ENCODE measurements at regions of chr2 and their contacts with region 1.

Region 1: GRCh38 chr2:219530048-219530963 is 13.3 kb downstream of the CHPF start:
- DNase-seq: peak; percentile 95
- H3K4me3 Mint-ChIP-seq: no peak overlapping the region
- H3K27ac Mint-ChIP-seq: no peak overlapping the region
- H3K4me1 Mint-ChIP-seq: peaks cover 3% of the 10 kb centered on the region
- H3K27me3 Mint-ChIP-seq: peaks cover 59% of the 10 kb centered on the region

Region 2: GRCh38 chr2:219402665-219403515 is 127.4 kb before region 1 on chr2:
- intact Hi-C with region 1: loop called (anchors 1 kb)
- DNase-seq: peak; percentile 86
- H3K4me3 Mint-ChIP-seq: no peak overlapping the region
- H3K27ac Mint-ChIP-seq: no peak overlapping the region
- H3K4me1 Mint-ChIP-seq: no peaks in the 10 kb centered on the region
- H3K27me3 Mint-ChIP-seq: peaks cover 9% of the 10 kb centered on the region

Region 3: DNA sequence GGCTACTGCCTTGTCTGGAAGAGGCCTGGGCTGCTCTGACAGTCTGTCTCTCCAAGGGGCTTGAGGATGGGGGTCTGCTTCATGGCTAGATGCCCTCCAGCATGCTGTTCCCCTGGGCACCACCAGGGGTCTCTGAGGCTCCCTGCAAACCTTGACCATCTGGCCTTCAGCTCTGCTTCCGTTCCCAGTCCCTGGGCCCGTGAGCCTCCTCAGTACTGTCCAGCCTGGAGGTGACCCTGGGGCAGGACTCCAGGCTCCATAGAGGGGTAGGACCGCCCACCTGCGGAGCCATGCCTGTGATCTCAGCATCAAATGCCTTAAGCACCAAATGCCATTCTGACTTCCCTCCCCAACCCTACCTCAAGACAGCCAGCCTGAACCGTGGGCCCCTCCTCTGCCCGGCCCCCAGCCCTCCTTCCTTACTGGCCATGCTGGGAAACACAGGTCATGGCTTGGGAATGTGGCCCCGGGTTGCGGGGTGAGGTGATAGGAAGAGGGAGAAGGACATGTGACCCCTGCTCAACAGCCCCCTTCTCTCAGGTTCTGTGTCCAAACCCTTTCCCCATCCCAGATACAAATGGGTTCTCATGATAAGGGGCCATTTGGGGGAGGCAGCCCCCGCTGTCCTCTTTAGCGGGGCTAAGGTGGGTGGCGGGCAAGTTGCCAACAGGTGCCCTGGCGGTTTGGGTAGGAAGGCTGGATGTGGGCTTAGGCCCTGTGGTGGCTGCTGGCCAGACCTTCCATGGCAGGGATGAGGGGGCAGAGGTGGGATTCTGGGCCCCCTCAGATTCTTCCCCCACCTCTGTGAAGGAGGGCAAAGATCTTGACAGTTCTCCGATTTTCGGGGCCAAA is 70.6 kb before region 1 on chr2:
- intact Hi-C with region 1: loop called (anchors 2 kb)
- DNase-seq: peak; percentile 79
- H3K4me3 Mint-ChIP-seq: no peak overlapping the region
- H3K27ac Mint-ChIP-seq: no peak overlapping the region
- H3K4me1 Mint-ChIP-seq: peaks cover 4% of the 10 kb centered on the region
- H3K27me3 Mint-ChIP-seq: no peaks in the 10 kb centered on the region

Region 4: DNA sequence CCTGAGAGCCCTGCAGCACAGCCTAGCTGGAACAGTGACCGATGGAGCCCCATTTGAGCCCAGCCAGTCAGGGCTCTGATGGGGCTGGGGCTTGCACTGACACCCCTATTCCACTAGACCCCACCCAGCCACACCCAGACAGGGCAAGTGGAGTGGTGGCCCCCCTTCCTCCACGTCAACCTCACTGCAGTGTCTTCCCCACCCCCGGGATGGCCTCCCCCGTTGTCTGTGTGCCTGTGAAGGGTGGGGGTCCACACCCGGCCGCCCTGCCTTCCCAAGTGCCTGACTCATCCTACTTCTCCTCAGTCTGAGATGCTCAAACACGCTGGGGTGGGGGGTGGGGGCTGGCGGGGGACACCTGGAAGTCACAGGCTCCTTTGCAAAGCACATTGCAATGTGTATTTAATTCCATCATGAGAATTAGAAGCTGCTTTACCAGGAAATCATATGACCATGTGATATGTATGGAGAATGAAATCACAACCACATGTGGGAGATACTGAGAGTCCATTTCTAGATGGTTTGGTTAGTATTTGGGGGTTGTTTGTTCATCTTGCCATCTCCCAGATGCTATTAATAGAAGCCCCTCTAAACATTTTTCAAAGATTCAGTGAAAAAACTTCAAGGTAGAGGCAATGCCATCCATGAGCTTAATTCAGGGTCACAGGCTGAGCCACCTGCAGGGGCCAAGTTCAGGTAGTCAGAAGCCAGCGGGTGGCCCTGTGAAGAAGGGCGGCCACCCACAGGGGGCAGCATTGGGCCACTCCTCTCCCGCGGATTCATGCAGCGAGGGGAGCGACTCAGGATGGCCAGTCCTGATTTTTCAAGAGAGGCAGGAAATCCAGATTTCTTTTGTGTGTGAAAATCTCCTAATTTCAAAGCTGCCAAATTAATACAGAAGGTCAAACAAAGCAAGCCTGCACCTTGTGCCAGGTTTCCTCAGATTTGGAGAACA is 54.3 kb before region 1 on chr2:
- intact Hi-C with region 1: loop called (anchors 1 kb)
- DNase-seq: peak; percentile 88
- H3K4me3 Mint-ChIP-seq: no peak overlapping the region
- H3K27ac Mint-ChIP-seq: no peak overlapping the region
- H3K4me1 Mint-ChIP-seq: no peaks in the 10 kb centered on the region
- H3K27me3 Mint-ChIP-seq: no peaks in the 10 kb centered on the region

Region 5: GRCh38 chr2:219498280-219499057 is 31.8 kb before region 1 on chr2 and contains the start of gene GMPPA:
- intact Hi-C with region 1: loop called (anchors 1 kb)
- DNase-seq: peak; percentile 99
- H3K4me3 Mint-ChIP-seq: peak within 1 kb of the TSS; percentile 97
- H3K27ac Mint-ChIP-seq: peak within 1 kb of the TSS; percentile 83
- H3K4me1 Mint-ChIP-seq: peaks cover 26% of the 10 kb centered on the region
- H3K27me3 Mint-ChIP-seq: peaks cover 39% of the 10 kb centered on the region
- total RNA-seq, gene GMPPA: 45.5 and 46.0 TPM in 2 replicates

Measured in activated CD4-positive, alpha-beta T cell treated with anti-CD3 and anti-CD28 coated beads, Interleukin-2, amount 10 ng/mL, durations not matched to agents 24 days and 14 days (primary cell).